ENCODE measurements at regions of chr9 and their contacts with region 1.

Region 1: GRCh38 chr9:122099271-122099869 is 6.3 kb upstream of the TTLL11 start:
- DNase-seq: peak; percentile 80
- H3K4me3 ChIP-seq: peak overlapping the region in 1 of 2 experiments; percentile 35; a peak in 1 of 4 replicates
- H3K27ac ChIP-seq: no peak overlapping the region
- H3K4me1 ChIP-seq: no peaks in the 10 kb centered on the region
- H3K27me3 ChIP-seq: no peaks in the 10 kb centered on the region
- CTCF ChIP-seq: peak; percentile 76
- EP300 ChIP-seq: no peak
- RAD21 ChIP-seq: peak; percentile 87

Region 2: GRCh38 chr9:122087406-122088200 is 11.8 kb before region 1 on chr9:
- CTCF ChIA-PET with region 1: interaction called, 15 read pairs
- POLR2A ChIA-PET with region 1: no interaction called
- DNase-seq: no peak
- H3K4me3 ChIP-seq: no peak overlapping the region
- H3K27ac ChIP-seq: no peak overlapping the region
- H3K4me1 ChIP-seq: peaks cover 6 to 24% of the 10 kb centered on the region in 2 experiments; a peak in 2 of 4 replicates
- H3K27me3 ChIP-seq: no peaks in the 10 kb centered on the region
- CTCF ChIP-seq: no peak
- EP300 ChIP-seq: no peak
- RAD21 ChIP-seq: no peak

Region 3: DNA sequence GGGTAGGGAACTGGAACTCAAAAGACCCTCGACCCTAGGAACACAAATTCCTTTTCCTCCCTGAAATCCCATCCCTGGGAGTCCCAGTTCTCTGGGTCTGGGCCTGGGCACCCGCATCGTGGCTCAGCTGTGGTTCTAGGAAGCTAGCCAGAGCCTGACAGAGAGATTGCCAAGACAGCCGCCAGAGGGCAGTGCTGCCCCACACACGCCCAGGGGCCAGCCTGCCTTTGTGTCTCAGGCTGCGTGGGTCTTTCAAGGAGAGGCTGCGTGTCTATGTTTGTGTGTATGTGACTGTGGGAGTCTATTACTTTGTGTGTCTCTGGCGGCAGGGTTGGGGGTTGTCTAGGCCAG is 25.8 kb after region 1 on chr9:
- CTCF ChIA-PET with region 1: interaction called, 327 read pairs
- POLR2A ChIA-PET with region 1: no interaction called
- DNase-seq: peak; percentile 92
- H3K4me3 ChIP-seq: peak overlapping the region in 1 of 2 experiments; percentile 37; a peak in 1 of 4 replicates
- H3K27ac ChIP-seq: no peak overlapping the region
- H3K4me1 ChIP-seq: peaks cover 6 to 8% of the 10 kb centered on the region in 2 experiments; a peak in 2 of 4 replicates
- H3K27me3 ChIP-seq: no peaks in the 10 kb centered on the region
- CTCF ChIP-seq: peak; percentile 94
- EP300 ChIP-seq: no peak
- RAD21 ChIP-seq: peak; percentile 96

Region 4: GRCh38 chr9:122264360-122265148 is 165.2 kb after region 1 on chr9 and contains the starts of genes MRRF and RBM18:
- CTCF ChIA-PET with region 1: interaction called, 12 read pairs
- POLR2A ChIA-PET with region 1: no interaction called
- DNase-seq: peak; percentile 91
- H3K4me3 ChIP-seq: peak within 1 kb of the TSS; percentile 55 to 88
- H3K27ac ChIP-seq: peak within 1 kb of the TSS; percentile 78 to 96
- H3K4me1 ChIP-seq: peaks cover 12 to 13% of the 10 kb centered on the region in 2 experiments; a peak in 3 of 4 replicates
- H3K27me3 ChIP-seq: no peaks in the 10 kb centered on the region
- CTCF ChIP-seq: no peak
- EP300 ChIP-seq: no peak
- RAD21 ChIP-seq: no peak
- polyA plus RNA-seq, gene MRRF: 35.1 and 50.6 TPM in 2 replicates
- polyA plus RNA-seq, gene RBM18: 8.2 and 13.1 TPM in 2 replicates

Region 5: DNA sequence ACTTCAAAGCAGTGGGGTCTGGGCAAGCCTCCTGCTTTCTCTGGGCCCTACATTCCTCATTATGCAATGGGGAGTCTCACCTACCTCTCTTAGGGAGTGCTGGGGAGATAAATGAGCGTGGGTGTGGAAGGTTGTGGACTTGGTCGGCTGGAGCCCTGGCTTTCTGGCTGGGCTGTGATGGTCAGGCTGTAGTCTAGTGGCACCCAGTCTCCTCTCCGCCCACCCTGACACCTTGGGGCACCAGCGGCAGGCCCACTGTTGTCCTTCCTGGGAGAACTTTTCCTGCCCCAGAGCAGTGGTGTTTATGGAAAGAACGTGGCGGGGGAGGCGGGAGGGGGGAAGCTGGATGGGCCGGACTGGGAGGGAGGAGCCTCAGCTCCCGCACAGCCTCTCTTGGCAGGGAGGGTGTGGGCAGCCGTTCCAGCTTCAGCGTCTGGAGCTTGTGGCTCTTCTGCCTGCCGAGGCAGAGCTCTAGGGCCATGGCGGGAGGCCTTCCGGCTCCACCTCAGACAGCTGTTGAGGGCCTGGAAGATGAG is 275.6 kb after region 1 on chr9:
- CTCF ChIA-PET with region 1: interaction called, 10 read pairs
- POLR2A ChIA-PET with region 1: no interaction called
- DNase-seq: peak; percentile 68
- H3K4me3 ChIP-seq: no peak overlapping the region
- H3K27ac ChIP-seq: no peak overlapping the region
- H3K4me1 ChIP-seq: peaks cover 9 to 31% of the 10 kb centered on the region in 2 experiments; a peak in 3 of 4 replicates
- H3K27me3 ChIP-seq: no peaks in the 10 kb centered on the region
- CTCF ChIP-seq: no peak
- EP300 ChIP-seq: no peak
- RAD21 ChIP-seq: no peak